ENCODE measurements at regions of chr21 and their contacts with region 1.

Region 1: DNA sequence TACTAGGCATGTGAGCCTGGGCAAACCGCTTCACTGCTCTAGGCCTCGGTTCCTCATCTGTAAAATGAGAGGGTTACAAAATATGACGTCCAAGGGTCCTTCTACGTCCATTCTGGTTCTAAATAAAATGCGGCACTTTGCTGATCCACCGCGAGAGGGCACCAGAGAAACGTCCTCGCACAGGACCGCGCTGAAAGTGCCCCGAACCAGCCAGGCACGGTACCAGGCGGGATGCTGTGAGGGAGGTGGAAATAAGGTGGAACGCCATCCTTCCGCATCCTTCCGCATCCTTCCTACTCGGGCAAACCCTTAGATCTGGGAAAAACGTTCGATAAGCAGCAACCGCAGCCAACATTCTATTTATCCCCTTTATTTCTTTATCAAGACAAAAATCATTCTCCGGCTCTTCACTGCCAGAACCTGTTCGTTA is 60.3 kb upstream of the KRTAP19-8 start:
- DNase-seq: peak; percentile 50 to 83
- H3K4me3 ChIP-seq: no peak overlapping the region
- H3K4me1 ChIP-seq: no peaks in the 10 kb centered on the region; the same call in 1 of the 2 replicates
- H3K27me3 ChIP-seq: 0 out of 2 replicates have a peak, but pooled peaks cover 2% of the 10 kb centered on the region

Region 2: DNA sequence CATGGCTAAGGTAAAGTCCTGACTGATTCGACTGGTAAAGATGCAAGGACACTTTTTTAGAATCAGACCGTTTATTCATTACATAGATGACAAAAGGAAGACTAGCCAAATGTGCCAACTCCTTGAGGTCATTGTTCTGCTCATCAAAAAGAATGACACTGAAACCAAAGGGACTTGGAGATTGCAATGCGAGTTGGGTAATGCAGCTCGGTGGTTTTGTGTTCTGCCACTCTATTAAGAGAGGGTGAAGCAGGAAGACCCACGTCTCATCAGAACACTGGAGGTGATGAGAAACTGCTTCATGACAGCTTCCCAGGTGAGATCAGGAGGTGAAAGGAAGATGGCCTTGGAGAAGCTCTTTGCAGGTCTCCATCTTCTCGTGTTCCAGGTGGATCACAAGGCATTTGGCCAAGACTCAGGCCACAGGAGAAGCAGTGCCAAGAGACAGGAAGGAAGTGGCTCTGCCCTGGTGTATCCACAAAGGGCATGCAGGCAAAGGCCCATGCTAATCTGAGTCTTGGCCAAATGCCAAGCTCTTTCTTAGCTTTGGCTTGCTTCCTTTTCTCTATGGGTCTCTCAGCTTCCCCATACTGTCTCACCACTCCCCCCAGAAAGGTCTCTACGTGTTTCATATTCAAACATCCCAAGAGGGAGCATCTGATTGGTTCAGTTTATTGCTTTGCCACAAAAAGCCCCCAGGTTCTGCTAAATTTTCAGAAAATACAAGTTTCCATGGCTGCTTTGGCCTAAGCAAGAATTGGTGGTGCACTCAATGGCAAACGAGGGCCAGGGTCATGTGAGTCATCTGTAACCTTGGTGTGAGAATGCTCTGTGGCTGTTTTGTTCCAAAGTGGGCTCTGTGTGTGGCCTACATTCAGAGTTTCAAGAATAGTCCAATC is 2019.5 kb before region 1 on chr21:
- in situ Hi-C with region 1: loop called (anchors 25 kb)
- DNase-seq: no peak
- H3K4me3 ChIP-seq: no peak overlapping the region
- H3K4me1 ChIP-seq: peaks cover 2% of the 10 kb centered on the region; the same call in 1 of the 2 replicates
- H3K27me3 ChIP-seq: peaks cover 8% of the 10 kb centered on the region; the same call in 1 of the 2 replicates

Region 3: DNA sequence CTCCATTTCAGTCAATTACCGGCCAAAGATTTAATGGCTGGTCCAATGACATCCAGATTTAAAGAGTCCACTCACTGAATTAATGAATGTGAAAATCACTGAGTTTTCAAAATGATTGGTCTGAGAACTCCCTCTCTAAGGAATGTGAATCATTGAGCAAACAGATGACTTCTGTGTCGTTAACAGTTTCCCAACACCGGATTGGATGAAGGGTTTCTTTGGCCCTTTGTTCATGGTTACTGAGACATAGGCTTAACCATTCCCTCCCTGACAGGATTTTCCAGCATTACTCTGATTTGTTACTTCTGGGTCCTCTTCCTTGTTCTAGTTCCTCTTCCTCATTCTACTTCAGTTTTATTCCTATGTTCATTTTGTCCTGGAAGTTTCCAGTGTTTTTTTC is 930.5 kb before region 1 on chr21:
- in situ Hi-C with region 1: no loop called
- DNase-seq: no peak
- H3K4me3 ChIP-seq: no peak overlapping the region
- H3K4me1 ChIP-seq: no peaks in the 10 kb centered on the region
- H3K27me3 ChIP-seq: no peaks in the 10 kb centered on the region

Region 4: DNA sequence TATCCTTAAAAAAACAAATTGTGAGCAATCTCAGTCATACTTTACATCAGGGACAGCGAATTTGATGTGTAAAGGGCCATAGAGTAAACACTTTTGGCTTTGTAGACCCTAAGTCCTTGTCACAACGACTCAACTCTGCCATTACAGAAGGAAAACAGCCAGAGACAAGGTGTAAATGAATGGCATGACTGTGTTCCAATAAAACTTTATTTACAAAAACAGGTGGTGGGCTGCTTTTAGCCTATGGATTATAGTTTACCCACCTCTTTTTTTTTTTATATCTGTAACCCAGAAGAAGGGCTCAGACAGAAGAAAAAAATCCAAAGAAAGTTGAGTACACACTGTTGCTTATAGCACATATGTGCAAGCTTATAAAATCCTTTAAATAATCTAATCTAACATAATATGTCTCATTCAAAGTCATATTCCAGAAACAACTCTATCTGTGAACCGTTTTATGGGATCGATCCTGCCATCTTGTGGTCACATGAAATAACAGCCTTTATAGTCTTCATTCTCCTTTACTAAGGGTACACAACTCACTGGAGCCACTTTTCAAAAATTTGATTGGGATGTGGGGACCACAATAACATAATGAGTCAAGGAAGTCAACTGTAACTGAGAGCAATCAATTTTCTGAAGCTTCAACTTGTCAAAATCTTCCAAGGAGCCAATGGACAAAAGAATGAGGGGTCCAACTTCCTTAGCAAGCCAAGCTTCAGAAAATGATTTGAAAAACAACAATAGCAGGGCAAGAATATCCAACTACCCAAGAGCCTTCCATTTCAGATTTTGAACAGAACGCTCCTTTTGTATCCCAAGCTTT is 81.9 kb after region 1 on chr21:
- in situ Hi-C with region 1: loop called (anchors 5 kb)
- DNase-seq: peak; percentile 52 to 69
- H3K4me3 ChIP-seq: no peak overlapping the region
- H3K4me1 ChIP-seq: no peaks in the 10 kb centered on the region; the same call in 1 of the 2 replicates
- H3K27me3 ChIP-seq: no peaks in the 10 kb centered on the region

Region 5: GRCh38 chr21:32021319-32021994 is 922.9 kb after region 1 on chr21:
- in situ Hi-C with region 1: no loop called
- DNase-seq: no peak
- H3K4me3 ChIP-seq: no peak overlapping the region
- H3K4me1 ChIP-seq: no peaks in the 10 kb centered on the region
- H3K27me3 ChIP-seq: no peaks in the 10 kb centered on the region